ENCODE measurements at regions of chr7 and their contacts with region 1.

Region 1: DNA sequence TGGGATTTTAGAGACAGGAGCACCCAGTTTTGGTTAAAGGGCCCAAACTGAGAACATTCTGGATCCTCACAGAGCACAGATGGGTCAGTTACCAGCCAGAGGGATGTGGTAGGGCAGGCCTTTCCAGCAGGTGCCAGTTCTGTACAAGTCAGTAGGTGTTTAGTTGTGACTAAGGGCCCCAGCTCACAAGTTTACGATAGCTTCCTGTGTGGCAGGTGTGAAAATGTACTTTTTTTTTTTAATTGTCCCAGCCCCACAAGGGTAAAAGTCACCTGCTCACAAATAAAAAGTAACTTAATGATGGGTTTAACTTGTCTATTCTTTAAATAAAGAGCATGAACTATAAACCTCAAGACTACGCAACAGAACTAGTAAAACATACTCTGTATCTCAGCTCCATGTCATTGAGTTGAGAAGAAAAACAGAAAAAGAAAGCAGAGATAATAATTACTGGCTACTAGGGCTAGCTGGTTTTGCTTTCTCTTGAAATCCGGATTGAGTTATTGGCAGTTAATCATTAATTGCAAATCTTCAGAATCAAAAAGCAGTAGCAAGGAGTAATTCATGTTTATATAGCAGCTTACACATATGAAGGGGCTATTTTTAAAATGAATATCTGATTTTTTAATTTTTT is 15.4 kb downstream of the NFE2L3 start:
- DNase-seq: peak; percentile 44
- H3K4me3 Mint-ChIP-seq: no peak overlapping the region
- H3K27ac Mint-ChIP-seq: peak overlapping the region; percentile 75
- H3K4me1 Mint-ChIP-seq: peaks cover 36% of the 10 kb centered on the region
- H3K27me3 Mint-ChIP-seq: no peaks in the 10 kb centered on the region

Region 2: GRCh38 chr7:25982684-25983083 is 184.7 kb before region 1 on chr7:
- CTCF ChIA-PET with region 1: no interaction called
- POLR2A ChIA-PET with region 1: no interaction called
- DNase-seq: no peak
- H3K4me3 Mint-ChIP-seq: no peak overlapping the region
- H3K27ac Mint-ChIP-seq: no peak overlapping the region
- H3K4me1 Mint-ChIP-seq: peaks cover 2% of the 10 kb centered on the region
- H3K27me3 Mint-ChIP-seq: peaks cover 11% of the 10 kb centered on the region

Region 3: GRCh38 chr7:26117142-26117807 is 50.1 kb before region 1 on chr7:
- CTCF ChIA-PET with region 1: no interaction called
- POLR2A ChIA-PET with region 1: no interaction called
- DNase-seq: no peak
- H3K4me3 Mint-ChIP-seq: no peak overlapping the region
- H3K27ac Mint-ChIP-seq: no peak overlapping the region
- H3K4me1 Mint-ChIP-seq: peaks cover 5% of the 10 kb centered on the region
- H3K27me3 Mint-ChIP-seq: peaks cover 2% of the 10 kb centered on the region

Region 4: DNA sequence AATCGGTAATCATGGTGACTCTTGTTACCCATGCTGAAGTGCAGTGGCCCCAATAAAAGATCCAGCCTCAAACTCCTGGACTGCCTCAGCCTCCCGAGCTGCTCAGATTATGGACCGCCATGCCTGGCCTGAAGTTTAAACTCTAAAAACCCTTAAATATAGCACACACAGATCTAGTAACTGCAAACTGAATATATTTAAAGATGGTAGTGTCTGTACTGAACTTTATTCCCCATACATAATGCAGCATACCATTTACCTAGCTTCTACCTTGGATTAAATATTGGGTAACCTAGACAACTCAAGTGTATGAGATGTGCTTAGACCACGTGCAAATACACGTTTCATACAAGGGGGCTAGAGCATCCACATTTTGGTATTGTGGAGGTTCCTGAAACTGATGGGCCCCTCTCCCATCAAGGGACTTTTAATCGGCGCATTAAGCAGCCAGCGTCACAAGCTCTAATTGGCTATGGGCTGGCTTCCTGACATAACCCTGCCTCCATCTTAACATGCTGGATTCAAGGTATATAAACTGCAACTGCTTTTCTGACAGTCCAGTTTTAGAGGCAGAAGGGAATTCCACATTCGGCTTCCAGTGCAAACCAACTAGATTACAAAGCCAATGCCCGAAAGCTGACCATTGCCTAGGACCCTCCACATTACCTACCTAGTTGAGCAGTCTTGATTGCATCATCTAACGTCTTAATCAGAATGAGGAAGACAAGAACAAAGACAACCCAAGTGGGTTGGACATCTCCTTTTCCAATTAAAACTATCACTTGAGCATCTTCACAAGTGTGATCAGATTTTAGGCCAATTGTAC is 20.2 kb after region 1 on chr7:
- CTCF ChIA-PET with region 1: interaction called, 3 read pairs
- POLR2A ChIA-PET with region 1: interaction called, 33 read pairs
- DNase-seq: no peak
- H3K4me3 Mint-ChIP-seq: no peak overlapping the region
- H3K27ac Mint-ChIP-seq: peak overlapping the region; percentile 63
- H3K4me1 Mint-ChIP-seq: peaks cover 78% of the 10 kb centered on the region
- H3K27me3 Mint-ChIP-seq: no peaks in the 10 kb centered on the region

Measured in activated CD4-positive, alpha-beta memory T cell treated with anti-CD3 and anti-CD28 coated beads, Interleukin-2, amount 10 ng/mL, durations not matched to agents 7 days and 5 days (primary cell).